Activated CD4-positive, alpha-beta memory T cell treated with anti-CD3 and anti-CD28 coated beads for 36 hours (primary cell): ENCODE measurements at regions of chr17 and their contacts with region 1.

Region 1: DNA sequence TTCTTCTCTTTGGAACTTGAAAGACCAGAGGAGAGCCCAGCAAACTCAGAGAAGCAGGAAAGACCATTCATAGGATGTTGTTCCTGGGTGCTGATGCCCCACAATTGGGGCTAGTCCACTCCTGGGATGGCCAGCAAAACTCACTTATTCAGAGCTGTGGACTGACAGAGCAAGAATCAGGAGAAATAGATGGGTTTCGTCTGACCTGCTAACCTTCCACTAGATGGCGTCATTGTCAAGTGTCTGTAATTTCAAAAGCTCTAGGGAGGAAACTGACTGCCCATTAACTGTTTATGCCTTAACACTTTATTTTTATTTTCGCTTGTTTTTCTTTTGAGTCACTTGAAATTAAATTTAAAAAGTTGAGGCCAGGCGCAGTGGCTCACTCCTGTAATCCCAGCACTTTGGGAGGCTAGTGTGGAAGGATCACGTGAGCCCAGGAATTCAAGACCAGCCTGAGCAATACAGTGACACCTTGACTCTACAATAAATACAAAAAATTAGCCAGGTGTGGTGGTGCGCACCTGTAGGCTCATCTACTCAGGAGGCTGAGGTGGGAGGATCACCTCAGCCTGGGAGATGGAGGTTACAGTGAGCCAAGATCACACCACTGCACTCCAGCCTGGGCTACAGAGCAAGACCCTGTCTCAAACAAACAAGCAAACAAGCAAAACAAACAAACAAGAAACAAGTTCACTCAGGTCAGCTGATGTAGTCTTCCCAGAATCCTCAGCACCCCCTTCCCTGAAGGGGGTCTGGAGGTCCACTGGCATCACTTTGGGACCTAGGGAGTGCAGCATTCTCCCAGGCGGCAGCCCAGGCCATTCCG is 28.6 kb upstream of the MILR1 start:
- DNase-seq: no peak
- H3K4me3 Mint-ChIP-seq: no peak overlapping the region
- H3K27ac Mint-ChIP-seq: no peak overlapping the region
- H3K4me1 Mint-ChIP-seq: no peaks in the 10 kb centered on the region
- H3K27me3 Mint-ChIP-seq: no peaks in the 10 kb centered on the region

Region 2: DNA sequence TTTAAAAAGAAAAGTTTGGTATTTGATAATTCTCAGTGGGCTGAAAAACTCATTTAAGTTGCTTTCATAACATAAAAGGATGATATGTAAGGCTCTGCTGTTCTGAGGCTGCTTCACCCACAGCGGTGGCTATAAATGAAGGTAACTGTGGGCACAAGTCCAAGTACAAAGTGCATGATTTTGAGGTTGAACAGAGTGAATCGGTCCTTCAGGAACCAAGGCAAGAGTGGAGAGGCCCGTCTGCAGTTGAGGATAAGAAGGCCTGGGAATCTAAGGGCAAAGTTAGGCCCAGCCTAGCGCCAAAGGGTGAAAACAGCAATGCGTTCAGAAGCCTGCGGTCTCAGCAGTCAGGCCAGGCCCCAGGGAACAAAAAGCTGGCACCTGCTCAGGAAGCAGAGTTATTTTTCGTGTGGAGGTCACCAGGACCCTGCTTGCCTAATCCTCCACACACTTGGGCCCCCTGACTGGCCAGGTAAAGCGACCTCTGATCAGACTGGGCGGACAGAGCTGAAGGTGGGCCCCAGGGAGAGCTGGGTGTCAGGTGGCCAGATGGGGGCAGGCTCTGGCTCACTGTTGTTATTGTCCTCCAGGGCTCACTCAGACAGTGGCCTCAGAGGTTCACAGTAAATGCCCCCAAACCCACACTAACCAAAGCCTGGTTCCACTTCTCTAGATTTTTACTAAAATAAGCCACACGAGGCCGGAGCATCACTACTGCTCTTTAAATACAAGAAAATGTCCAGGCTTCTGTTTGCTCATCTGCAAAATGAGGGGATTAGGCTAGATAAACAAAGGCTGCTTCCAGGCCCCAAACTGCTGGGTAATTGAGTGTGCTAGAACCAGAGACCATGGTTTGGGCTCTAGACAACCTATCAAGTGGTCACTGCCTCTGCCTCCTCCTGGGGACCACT is 203.8 kb before region 1 on chr17:
- CTCF ChIA-PET with region 1: interaction called, 10 read pairs
- POLR2A ChIA-PET with region 1: no interaction called
- intact Hi-C with region 1: no loop called
- DNase-seq: no peak
- H3K4me3 Mint-ChIP-seq: no peak overlapping the region
- H3K27ac Mint-ChIP-seq: no peak overlapping the region
- H3K4me1 Mint-ChIP-seq: peaks cover 20% of the 10 kb centered on the region
- H3K27me3 Mint-ChIP-seq: no peaks in the 10 kb centered on the region

Region 3: GRCh38 chr17:64320613-64321553 is 99.5 kb before region 1 on chr17:
- CTCF ChIA-PET with region 1: interaction called, 230 read pairs
- POLR2A ChIA-PET with region 1: interaction called, 4 read pairs
- intact Hi-C with region 1: loop called (anchors 1 kb)
- DNase-seq: peak; percentile 64
- H3K4me3 Mint-ChIP-seq: no peak overlapping the region
- H3K27ac Mint-ChIP-seq: no peak overlapping the region
- H3K4me1 Mint-ChIP-seq: no peaks in the 10 kb centered on the region
- H3K27me3 Mint-ChIP-seq: no peaks in the 10 kb centered on the region

Region 4: GRCh38 chr17:64393000-64393402 is 27.4 kb before region 1 on chr17:
- CTCF ChIA-PET with region 1: interaction called, 15 read pairs
- POLR2A ChIA-PET with region 1: no interaction called
- intact Hi-C with region 1: no loop called
- DNase-seq: peak; percentile 18
- H3K4me3 Mint-ChIP-seq: no peak overlapping the region
- H3K27ac Mint-ChIP-seq: no peak overlapping the region
- H3K4me1 Mint-ChIP-seq: peaks cover 8% of the 10 kb centered on the region
- H3K27me3 Mint-ChIP-seq: no peaks in the 10 kb centered on the region

Region 5: GRCh38 chr17:64479650-64480049 is 59.3 kb after region 1 on chr17:
- CTCF ChIA-PET with region 1: interaction called, 23 read pairs
- POLR2A ChIA-PET with region 1: no interaction called
- intact Hi-C with region 1: no loop called
- DNase-seq: no peak
- H3K4me3 Mint-ChIP-seq: no peak overlapping the region
- H3K27ac Mint-ChIP-seq: no peak overlapping the region
- H3K4me1 Mint-ChIP-seq: peaks cover 6% of the 10 kb centered on the region
- H3K27me3 Mint-ChIP-seq: no peaks in the 10 kb centered on the region

Region 6: GRCh38 chr17:64496786-64497564 is 76.6 kb after region 1 on chr17 and contains the start of gene POLG2:
- CTCF ChIA-PET with region 1: interaction called, 192 read pairs
- POLR2A ChIA-PET with region 1: no interaction called
- intact Hi-C with region 1: no loop called
- DNase-seq: peak; percentile 97
- H3K4me3 Mint-ChIP-seq: peak within 1 kb of the TSS; percentile 96
- H3K27ac Mint-ChIP-seq: peak within 1 kb of the TSS; percentile 93
- H3K4me1 Mint-ChIP-seq: peaks cover 74% of the 10 kb centered on the region
- H3K27me3 Mint-ChIP-seq: no peaks in the 10 kb centered on the region
- total RNA-seq, gene POLG2: 25.8 to 28.1 TPM

Region 7: DNA sequence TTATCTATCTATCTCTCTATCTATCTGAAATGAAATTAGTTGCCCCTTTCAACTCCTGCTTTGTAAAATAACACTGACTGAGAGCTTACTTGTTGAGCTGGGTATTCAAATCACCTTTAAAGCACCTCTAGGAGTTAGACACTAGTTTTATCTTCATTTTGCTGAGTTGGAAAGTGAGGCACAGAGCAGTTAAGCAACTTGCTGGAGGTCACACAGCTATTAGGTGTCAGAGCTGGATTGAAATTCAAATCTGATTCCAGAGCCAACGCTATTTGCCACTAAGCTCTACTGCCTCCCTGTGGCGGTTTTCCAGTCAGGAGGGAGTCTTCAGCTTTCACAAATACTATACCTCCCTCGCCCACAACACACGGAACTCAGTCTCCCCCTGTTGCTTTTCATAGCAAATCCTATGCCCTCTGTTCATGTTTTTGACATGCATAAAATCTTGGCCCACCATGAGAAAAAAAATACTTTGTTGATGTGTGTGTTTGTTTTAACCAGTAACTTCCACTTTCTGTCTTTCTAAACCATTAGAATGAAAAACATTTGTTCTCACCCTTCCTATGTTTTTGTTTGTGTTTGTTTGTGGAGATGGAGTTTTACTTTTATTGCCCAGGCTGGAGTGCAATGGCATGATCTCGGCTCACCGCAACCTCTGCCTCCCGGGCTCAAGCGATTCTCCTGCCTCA is 316.6 kb after region 1 on chr17:
- CTCF ChIA-PET with region 1: interaction called, 43 read pairs
- POLR2A ChIA-PET with region 1: no interaction called
- intact Hi-C with region 1: no loop called
- DNase-seq: peak; percentile 74
- H3K4me3 Mint-ChIP-seq: no peak overlapping the region
- H3K27ac Mint-ChIP-seq: no peak overlapping the region
- H3K4me1 Mint-ChIP-seq: peaks cover 6% of the 10 kb centered on the region
- H3K27me3 Mint-ChIP-seq: no peaks in the 10 kb centered on the region